A673 (cell line): ENCODE measurements at regions of chr9 and their contacts with region 1.

Region 1: DNA sequence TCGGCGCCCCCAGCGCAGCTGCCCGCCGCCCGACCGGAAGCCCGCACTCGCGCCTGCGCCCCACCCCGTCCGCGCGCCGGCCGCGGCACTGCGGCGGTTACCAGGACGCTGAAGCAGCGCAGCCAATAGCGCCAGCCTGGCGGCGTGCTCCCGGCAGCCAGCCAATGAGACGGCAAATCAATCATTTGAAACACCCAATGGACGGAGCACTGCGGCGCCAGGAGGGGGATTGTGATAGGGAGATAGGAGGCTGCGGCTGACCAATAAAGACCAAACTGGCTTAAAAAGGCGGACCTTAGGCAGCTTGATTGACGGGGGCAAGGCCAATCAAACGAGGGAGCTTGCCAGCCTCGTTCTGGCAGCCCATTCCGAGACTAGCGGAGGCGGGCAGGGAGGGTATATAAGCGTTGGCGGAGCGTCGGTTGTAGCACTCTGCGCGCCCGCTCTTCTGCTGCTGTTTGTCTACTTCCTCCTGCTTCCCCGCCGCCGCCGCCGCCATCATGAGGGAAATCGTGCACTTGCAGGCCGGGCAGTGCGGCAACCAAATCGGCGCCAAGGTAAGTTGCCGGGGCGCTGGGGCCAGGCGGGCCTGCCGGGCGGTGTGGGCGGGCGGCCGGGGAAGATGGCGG is at the start of gene TUBB4B:
- DNase-seq: peak; percentile 100
- H3K4me3 ChIP-seq: peak within 1 kb of the TSS; percentile 97
- H3K27ac ChIP-seq: peak within 1 kb of the TSS; percentile 98
- H3K4me1 ChIP-seq: peaks cover 44% of the 10 kb centered on the region
- H3K27me3 ChIP-seq: no peaks in the 10 kb centered on the region
- CTCF ChIP-seq: no peak
- total RNA-seq, gene TUBB4B: 645 and 714 TPM in 2 replicates

Region 2: DNA sequence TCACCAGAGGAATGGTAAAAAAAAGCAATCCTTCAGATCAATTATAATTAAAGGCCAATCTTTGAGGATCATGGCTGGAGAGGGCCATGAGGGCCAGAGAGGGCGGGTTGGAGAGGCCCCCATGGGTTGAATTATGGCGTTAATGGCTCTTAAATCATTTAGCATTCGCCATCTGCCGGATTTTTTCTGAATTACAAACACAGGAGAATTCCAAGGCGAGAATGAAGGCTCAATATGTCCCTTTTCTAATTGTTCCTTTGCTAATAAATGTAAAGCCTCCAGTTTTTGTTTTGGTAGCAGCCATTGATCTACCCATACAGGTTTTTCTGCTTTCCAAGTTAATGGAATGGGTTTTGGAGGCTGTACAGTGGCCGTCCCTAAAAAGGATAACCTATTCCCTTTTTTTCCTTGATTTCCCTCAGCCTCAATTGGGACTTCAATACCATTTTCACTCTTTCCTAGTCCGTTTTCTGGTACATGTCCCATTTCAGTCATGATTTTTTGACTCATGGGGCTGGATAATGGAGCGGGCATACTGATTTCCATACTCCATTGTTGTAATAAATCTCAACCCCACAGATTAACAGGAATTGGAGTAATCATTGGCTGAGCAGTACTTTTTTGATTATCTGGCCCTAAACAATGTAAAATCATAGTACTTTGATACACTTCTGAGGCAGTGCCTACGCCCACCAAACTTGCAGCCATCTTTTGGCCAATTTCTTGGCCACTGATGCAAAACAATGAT is 456.6 kb before region 1 on chr9:
- CTCF ChIA-PET with region 1: no interaction called
- POLR2A ChIA-PET with region 1: no interaction called
- intact Hi-C with region 1: no loop called
- DNase-seq: peak; percentile 54
- H3K4me3 ChIP-seq: no peak overlapping the region
- H3K27ac ChIP-seq: no peak overlapping the region
- H3K4me1 ChIP-seq: no peaks in the 10 kb centered on the region
- H3K27me3 ChIP-seq: no peaks in the 10 kb centered on the region
- CTCF ChIP-seq: peak; percentile 56

Region 3: GRCh38 chr9:137046098-137046787 is 194.7 kb before region 1 on chr9 and contains the start of gene NPDC1:
- CTCF ChIA-PET with region 1: interaction called, 3 read pairs
- POLR2A ChIA-PET with region 1: no interaction called
- intact Hi-C with region 1: loop called (anchors 5 kb)
- DNase-seq: peak; percentile 80
- H3K4me3 ChIP-seq: peak within 1 kb of the TSS; percentile 76
- H3K27ac ChIP-seq: peak within 1 kb of the TSS; percentile 27
- H3K4me1 ChIP-seq: peaks cover 24% of the 10 kb centered on the region
- H3K27me3 ChIP-seq: no peaks in the 10 kb centered on the region
- CTCF ChIP-seq: peak; percentile 88
- total RNA-seq, gene NPDC1: 73.9 and 81.4 TPM in 2 replicates

Region 4: DNA sequence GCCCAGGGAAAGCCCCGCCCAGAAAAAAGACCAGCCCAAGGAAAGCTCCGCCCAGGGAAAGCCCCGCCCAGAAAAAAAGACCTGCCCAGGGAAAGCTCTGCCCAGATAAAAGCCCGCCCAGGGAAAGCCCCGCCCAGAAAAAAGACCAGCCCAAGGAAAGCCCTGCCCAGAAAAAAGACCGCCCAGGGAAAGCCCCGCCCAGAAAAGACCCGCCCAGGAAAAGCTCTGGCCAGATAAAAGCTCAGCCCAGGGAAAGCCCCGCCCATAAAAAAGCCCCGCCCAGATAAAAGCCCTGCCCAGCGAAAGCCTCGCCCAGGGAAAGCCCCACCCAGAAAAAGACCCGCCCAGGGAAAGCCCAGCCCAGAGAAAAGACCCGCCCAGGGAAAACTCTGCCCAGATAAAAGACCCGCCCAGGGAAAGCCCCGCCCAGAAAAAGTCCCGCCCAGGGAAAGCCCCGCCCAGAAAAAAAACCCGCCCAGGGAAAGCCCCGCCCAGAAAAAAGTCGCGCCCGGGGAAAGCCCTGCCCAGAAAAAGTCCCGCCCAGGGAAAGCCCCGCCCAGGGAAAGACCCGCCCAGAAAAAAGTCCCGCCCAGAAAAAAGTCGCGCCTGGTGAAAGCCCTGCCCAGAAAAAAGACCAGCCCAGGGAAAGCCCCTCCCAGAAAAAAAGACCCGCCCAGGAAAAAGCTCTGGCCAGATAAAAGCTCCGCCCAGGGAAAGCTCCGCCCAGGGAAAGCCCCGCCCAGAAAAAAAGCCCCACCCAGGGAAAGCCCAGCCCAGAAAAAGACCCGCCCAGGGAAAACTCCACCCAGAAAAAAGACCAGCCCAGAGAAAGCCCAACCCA is 90.1 kb before region 1 on chr9:
- CTCF ChIA-PET with region 1: interaction called, 15 read pairs
- POLR2A ChIA-PET with region 1: no interaction called
- intact Hi-C with region 1: no loop called
- DNase-seq: peak; percentile 76
- H3K4me3 ChIP-seq: no peak overlapping the region
- H3K27ac ChIP-seq: no peak overlapping the region
- H3K4me1 ChIP-seq: peaks cover 5% of the 10 kb centered on the region
- H3K27me3 ChIP-seq: peaks cover 3% of the 10 kb centered on the region
- CTCF ChIP-seq: no peak

Region 5: DNA sequence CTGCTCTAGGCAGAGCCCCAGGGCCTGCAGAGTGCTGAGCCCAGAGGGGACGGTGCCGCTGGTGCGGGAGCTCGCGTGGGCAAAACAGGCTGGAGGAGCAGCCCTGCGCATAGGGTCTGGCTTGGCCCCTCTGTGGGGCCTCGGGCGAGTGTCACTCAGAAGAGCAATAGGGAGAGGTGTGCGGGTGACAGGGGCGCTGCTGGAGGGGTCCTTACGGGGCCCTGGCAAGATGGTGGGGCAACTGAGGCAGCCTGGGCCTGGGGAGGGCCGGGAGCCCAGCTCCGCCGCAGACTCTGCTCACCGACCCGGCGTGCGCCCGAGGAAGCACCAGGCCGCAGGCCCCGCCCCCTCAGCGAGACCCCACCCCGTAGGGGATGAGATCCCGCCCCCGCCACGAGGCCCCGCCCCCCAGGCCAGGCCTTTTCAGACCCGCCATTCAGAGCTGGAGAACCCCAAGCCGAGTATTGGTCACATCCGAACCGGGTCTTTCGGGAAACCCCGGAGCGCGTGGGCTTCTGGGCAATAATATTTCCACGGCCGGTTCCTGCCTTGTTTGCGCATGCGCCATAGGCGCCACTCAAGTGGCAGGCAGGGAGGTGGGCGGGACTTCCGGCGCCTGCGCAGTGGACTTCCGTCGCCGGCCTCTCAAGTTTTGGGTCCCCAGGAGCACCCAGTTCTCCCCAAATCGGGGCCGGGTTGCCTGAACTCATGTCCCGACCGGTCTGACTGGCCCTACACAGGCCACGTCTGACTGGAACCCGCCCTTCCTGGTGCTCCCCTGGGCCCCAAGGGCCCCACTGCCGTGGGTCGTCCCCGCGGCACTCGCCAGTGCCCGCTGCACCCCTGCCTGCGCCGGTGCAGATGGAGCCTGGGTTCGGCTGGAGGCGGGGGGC is 17.7 kb before region 1 on chr9:
- CTCF ChIA-PET with region 1: interaction called, 22 read pairs
- POLR2A ChIA-PET with region 1: interaction called, 16 read pairs
- intact Hi-C with region 1: no loop called
- DNase-seq: peak; percentile 99
- H3K4me3 ChIP-seq: peak overlapping the region; percentile 72
- H3K27ac ChIP-seq: peak overlapping the region; percentile 87
- H3K4me1 ChIP-seq: peaks cover 9% of the 10 kb centered on the region
- H3K27me3 ChIP-seq: no peaks in the 10 kb centered on the region
- CTCF ChIP-seq: no peak

Region 6: DNA sequence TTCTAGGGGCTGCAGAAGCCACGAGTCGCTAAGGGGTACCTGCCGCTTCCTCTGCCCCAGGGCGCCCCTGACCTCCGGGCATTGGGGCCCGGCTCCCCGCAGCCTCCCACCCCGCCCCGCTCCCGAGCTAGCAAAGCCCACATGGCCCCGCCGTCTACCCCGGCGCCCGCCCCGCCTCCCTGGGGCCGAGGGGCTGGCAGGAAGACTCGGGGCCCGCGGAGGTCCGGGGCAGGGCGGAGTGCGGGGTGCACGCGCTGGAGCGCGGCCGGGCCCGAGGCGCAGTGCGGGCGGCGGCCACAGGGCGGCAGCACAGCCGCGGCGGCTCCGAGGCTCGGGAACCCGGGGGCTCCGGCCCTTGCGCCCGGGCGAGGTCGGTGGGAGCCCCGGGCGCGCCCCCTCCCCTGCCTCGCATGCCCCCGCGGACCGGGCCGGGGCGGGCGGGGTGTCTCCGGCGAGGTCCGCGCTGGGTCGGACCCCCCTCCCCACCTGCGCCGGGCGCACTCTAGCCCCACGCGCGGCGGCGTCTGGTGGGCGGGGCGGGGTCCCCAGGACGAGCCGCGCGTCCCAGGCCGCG is 54.4 kb after region 1 on chr9:
- CTCF ChIA-PET with region 1: interaction called, 10 read pairs
- POLR2A ChIA-PET with region 1: no interaction called
- intact Hi-C with region 1: no loop called
- DNase-seq: peak; percentile 54
- H3K4me3 ChIP-seq: peak overlapping the region; percentile 42
- H3K27ac ChIP-seq: no peak overlapping the region
- H3K4me1 ChIP-seq: peaks cover 12% of the 10 kb centered on the region
- H3K27me3 ChIP-seq: no peaks in the 10 kb centered on the region
- CTCF ChIP-seq: no peak